ENCODE measurements at regions of chr10 and their contacts with region 1.

Region 1: GRCh38 chr10:60032723-60033122 is 126.4 kb upstream of the CCDC6 start:
- DNase-seq: peak in 2 of 4 experiments; percentile 44 to 71
- ATAC-seq: peak; percentile 77
- H3K4me3 ChIP-seq: no peak overlapping the region
- H3K27ac ChIP-seq: no peak overlapping the region
- H3K4me1 ChIP-seq: peaks cover 3 to 15% of the 10 kb centered on the region in 2 experiments; a peak in 4 of 5 replicates
- H3K27me3 ChIP-seq: no peaks in the 10 kb centered on the region
- CTCF ChIP-seq: peak; percentile 57 to 85 (median 71); a peak in 5 of 6 replicates
- EP300 ChIP-seq: no peak
- POLR2A ChIP-seq: no peak
- RAD21 ChIP-seq: peak; percentile 86 to 92

Region 2: GRCh38 chr10:59240582-59241183 is 792.0 kb before region 1 on chr10:
- CTCF ChIA-PET with region 1: no interaction called
- POLR2A ChIA-PET with region 1: no interaction called
- in situ Hi-C with region 1: no loop called
- intact Hi-C with region 1: loop called (anchors 10 kb)
- DNase-seq: peak; percentile 25 to 59 (median 46)
- ATAC-seq: no peak
- H3K4me3 ChIP-seq: no peak overlapping the region
- H3K27ac ChIP-seq: no peak overlapping the region
- H3K4me1 ChIP-seq: no peaks in the 10 kb centered on the region
- H3K27me3 ChIP-seq: no peaks in the 10 kb centered on the region
- CTCF ChIP-seq: peak; percentile 27 to 63 (median 42); a peak in 5 of 6 replicates
- EP300 ChIP-seq: no peak
- POLR2A ChIP-seq: no peak
- RAD21 ChIP-seq: peak; percentile 35 to 71

Region 3: DNA sequence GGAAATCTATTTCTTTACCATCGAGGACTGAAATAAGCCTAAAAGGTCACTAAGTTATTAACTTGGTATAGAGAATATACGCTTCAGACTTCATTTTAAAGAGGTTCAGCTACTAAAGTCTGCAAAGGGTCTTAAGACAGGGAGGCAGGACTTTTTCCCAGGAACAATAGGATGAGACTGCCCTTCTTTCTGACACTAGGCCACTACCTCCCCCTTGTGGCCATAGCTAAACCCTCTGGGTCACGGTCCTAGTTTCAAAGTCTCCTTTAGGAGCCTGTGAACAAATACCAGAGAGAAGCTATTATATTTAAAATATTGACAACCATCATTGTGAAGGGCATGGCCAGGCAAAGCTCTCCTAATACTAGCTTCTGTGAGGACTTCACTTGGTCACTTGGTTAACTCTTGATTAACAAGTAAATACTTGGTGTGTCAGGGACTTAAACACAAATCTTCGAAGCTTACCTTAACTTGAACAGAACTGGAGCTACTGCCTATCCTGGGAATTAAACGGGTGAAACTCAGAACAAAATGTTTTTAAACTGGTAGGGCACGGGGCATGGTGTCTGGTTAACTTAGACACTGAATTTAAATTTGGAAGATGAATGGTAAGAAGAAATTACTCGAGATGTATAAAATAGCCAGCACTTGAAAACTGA is 202.0 kb before region 1 on chr10:
- CTCF ChIA-PET with region 1: no interaction called
- POLR2A ChIA-PET with region 1: no interaction called
- in situ Hi-C with region 1: no loop called
- intact Hi-C with region 1: loop called (anchors 1 kb)
- DNase-seq: peak; percentile 70 to 77 (median 74)
- ATAC-seq: peak; percentile 92
- H3K4me3 ChIP-seq: no peak overlapping the region
- H3K27ac ChIP-seq: no peak overlapping the region
- H3K4me1 ChIP-seq: peaks cover 0 to 13% of the 10 kb centered on the region in 2 experiments; a peak in 4 of 5 replicates
- H3K27me3 ChIP-seq: no peaks in the 10 kb centered on the region
- CTCF ChIP-seq: peak; percentile 72 to 83 (median 76)
- EP300 ChIP-seq: no peak
- POLR2A ChIP-seq: no peak
- RAD21 ChIP-seq: peak; percentile 70 to 75

Region 4: DNA sequence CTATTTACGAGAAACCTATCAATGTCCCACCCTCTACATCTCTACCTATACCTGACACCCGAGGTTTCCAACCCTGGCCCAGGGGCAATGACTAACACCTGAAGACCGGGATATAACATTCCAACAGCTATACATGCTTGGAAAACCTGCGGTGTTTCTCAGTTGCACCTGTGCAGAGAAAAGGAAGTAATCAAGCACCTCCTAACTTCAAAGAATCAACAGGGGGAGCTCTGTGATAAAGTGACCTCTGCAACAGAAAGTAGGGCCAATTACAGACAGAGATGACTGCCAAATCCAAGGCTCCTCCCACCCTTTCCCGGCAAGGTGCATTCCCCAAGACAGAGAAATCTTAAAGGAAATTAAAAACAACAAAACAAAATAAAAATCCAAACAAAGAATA is 167.6 kb before region 1 on chr10:
- CTCF ChIA-PET with region 1: no interaction called
- POLR2A ChIA-PET with region 1: no interaction called
- in situ Hi-C with region 1: no loop called
- intact Hi-C with region 1: loop called (anchors 1 kb)
- DNase-seq: peak; percentile 55 to 70 (median 58)
- ATAC-seq: peak; percentile 89
- H3K4me3 ChIP-seq: no peak overlapping the region
- H3K27ac ChIP-seq: no peak overlapping the region
- H3K4me1 ChIP-seq: peaks cover 3 to 25% of the 10 kb centered on the region in 2 experiments; a peak in 3 of 5 replicates
- H3K27me3 ChIP-seq: no peaks in the 10 kb centered on the region
- CTCF ChIP-seq: peak; percentile 63 to 88 (median 64)
- EP300 ChIP-seq: no peak
- POLR2A ChIP-seq: no peak
- RAD21 ChIP-seq: peak; percentile 73 to 90

Region 5: DNA sequence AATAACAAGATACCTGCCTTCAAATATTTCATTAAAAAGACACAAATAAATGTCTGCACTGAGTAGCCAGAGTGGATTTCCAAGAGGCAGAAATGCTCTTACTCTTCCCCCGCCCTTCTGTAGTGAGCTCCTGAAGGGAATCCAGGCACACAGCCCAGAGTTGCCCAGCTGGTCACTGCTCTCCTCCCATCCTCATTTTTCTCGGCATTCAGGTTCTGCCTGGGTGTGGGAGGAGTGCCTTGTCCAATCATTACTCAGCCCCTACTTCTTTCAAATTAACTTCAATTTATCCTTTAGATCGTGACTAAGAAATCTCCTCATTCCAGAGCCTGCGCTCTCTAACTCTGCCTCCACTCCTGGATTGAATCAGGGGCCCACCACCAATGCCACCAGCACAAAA is 138.6 kb before region 1 on chr10:
- CTCF ChIA-PET with region 1: no interaction called
- POLR2A ChIA-PET with region 1: no interaction called
- in situ Hi-C with region 1: no loop called
- intact Hi-C with region 1: no loop called
- DNase-seq: no peak
- ATAC-seq: no peak
- H3K4me3 ChIP-seq: no peak overlapping the region
- H3K27ac ChIP-seq: no peak overlapping the region
- H3K4me1 ChIP-seq: peaks cover 13 to 53% of the 10 kb centered on the region in 2 experiments
- H3K27me3 ChIP-seq: no peaks in the 10 kb centered on the region
- CTCF ChIP-seq: no peak
- EP300 ChIP-seq: no peak
- POLR2A ChIP-seq: no peak
- RAD21 ChIP-seq: no peak

Measured in K562 (cell line).